CD14-positive monocyte (primary cell): ENCODE measurements at regions of chr2 and their contacts with region 1.

Region 1: GRCh38 chr2:230712443-230713330 is at the start of gene CAB39:
- DNase-seq: peak; percentile 95 to 96 (median 96)
- H3K4me3 ChIP-seq: peak within 1 kb of the TSS; percentile 77 to 97 (median 81)
- H3K4me3 Mint-ChIP-seq: peak within 1 kb of the TSS; percentile 95 to 99
- H3K27ac ChIP-seq: peak within 1 kb of the TSS; percentile 69 to 93
- H3K27ac Mint-ChIP-seq: peak within 1 kb of the TSS; percentile 90 to 98 (median 95)
- H3K4me1 ChIP-seq: peaks cover 52 to 71% of the 10 kb centered on the region in 2 donors
- H3K4me1 Mint-ChIP-seq: peaks cover 69% of the 10 kb centered on the region
- H3K27me3 ChIP-seq: no peaks in the 10 kb centered on the region
- H3K27me3 Mint-ChIP-seq: peaks cover 3 to 5% (median 3%) of the 10 kb centered on the region in 3 donors
- CTCF ChIP-seq: peak; percentile 84
- polyA plus RNA-seq, gene CAB39: 33.1 to 53.8 (median 38.3) TPM

Region 2: DNA sequence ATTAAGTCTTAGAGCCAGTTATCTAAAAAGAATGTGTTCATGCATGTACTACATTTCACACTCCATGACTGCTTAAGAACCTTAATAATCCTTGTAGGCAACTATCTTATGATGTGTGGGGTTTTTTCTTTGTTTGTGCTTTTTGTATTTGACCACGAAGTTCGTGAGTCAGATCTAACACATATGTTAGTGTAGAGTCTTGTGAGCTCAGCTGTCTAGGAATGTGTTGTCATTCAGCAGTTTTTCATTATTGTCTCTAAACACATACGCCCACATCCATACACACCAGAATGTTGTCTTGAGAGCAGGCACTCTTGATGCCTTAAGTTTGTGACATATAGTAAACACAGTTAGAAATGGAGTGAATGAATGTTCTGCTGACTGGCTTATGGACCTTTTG is 38.4 kb after region 1 on chr2:
- intact Hi-C with region 1: no loop called
- DNase-seq: no peak
- H3K4me3 ChIP-seq: no peak overlapping the region
- H3K4me3 Mint-ChIP-seq: no peak overlapping the region
- H3K27ac ChIP-seq: no peak overlapping the region
- H3K27ac Mint-ChIP-seq: no peak overlapping the region
- H3K4me1 ChIP-seq: peaks cover 7 to 14% of the 10 kb centered on the region in 2 donors
- H3K4me1 Mint-ChIP-seq: peaks cover 38% of the 10 kb centered on the region
- H3K27me3 ChIP-seq: no peaks in the 10 kb centered on the region
- H3K27me3 Mint-ChIP-seq: no peaks in the 10 kb centered on the region
- CTCF ChIP-seq: no peak

Region 3: GRCh38 chr2:230793572-230794359 is 81.1 kb after region 1 on chr2:
- intact Hi-C with region 1: loop called (anchors 5 kb)
- DNase-seq: peak; percentile 93 to 98 (median 98)
- H3K4me3 ChIP-seq: peak overlapping the region in 1 of 3 experiments; percentile 5
- H3K4me3 Mint-ChIP-seq: peak overlapping the region; percentile 35 to 75
- H3K27ac ChIP-seq: peak overlapping the region; percentile 81 to 98
- H3K27ac Mint-ChIP-seq: peak overlapping the region; percentile 94 to 98 (median 97)
- H3K4me1 ChIP-seq: peaks cover 53 to 63% of the 10 kb centered on the region in 2 donors
- H3K4me1 Mint-ChIP-seq: peaks cover 57% of the 10 kb centered on the region
- H3K27me3 ChIP-seq: no peaks in the 10 kb centered on the region
- H3K27me3 Mint-ChIP-seq: peaks cover 0 to 3% (median 0%) of the 10 kb centered on the region in 3 donors
- CTCF ChIP-seq: no peak